ENCODE measurements at regions of chr9 and their contacts with region 1.

Region 1: DNA sequence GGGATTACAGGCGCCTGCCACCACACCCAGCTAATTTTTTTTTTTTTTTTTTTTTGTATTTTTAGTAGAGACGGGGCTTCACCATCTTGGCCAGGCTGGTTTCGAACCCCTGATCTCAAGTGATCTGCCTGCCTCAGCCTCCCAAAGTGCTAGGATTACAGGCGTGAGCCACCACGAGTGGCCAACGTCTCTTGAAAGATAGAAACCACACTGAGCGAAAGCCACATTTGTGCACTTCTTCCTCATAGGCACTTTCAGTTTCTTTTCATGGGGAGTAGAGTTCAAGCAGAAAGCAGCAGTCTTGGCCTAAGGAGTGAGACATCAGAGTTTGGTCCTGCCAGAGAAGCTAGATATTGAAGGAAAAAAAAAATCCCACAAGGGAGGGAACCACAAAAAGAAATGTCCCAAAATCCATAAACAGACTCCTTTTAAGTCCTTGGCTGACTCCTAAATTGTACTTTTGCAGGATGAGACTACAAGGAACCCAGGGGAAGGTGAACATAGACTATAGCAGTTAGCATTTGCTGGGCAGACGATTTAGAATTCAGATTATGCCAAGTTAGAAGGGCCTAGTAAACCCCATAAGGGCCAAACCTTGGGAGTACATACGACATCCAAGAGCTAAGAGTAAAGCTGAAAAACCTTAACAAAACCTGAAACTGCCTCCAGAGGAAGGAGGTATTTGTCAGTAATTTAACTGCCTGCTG is 43.9 kb upstream of the GLIPR2 start:
- DNase-seq: no peak
- ATAC-seq: no peak
- H3K4me3 ChIP-seq: no peak overlapping the region
- H3K27ac ChIP-seq: no peak overlapping the region
- H3K4me1 ChIP-seq: peaks cover 16% of the 10 kb centered on the region
- H3K27me3 ChIP-seq: no peaks in the 10 kb centered on the region
- CTCF ChIP-seq: no peak

Region 2: DNA sequence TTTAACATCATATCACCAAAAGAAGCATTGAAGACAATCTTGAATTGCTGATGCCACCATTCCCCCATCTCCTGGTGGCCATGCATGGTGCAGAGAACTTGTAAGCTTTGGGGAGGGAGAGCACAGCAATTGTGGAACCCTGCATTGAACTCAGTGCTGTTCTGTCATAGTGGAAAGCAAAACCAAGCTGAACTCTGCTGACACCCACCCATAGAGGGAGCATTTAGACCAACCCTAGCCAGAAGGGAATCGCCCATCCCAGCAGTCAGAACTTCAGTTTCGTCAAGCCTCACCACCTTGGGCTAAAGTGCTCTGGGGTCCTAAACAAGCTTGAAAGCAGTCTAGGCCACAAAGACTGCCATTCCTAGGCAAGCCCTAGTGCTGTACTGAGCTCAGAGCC is 640.2 kb before region 1 on chr9:
- CTCF ChIA-PET with region 1: no interaction called
- POLR2A ChIA-PET with region 1: interaction called, 11 read pairs
- intact Hi-C with region 1: no loop called
- DNase-seq: no peak
- ATAC-seq: no peak
- H3K4me3 ChIP-seq: no peak overlapping the region
- H3K27ac ChIP-seq: no peak overlapping the region
- H3K4me1 ChIP-seq: no peaks in the 10 kb centered on the region
- H3K27me3 ChIP-seq: no peaks in the 10 kb centered on the region
- CTCF ChIP-seq: 0 out of 2 replicates have a peak, but pooled peaks have one; percentile 34

Region 3: GRCh38 chr9:36008774-36009300 is 83.8 kb before region 1 on chr9:
- CTCF ChIA-PET with region 1: no interaction called
- POLR2A ChIA-PET with region 1: no interaction called
- intact Hi-C with region 1: no loop called
- DNase-seq: peak; percentile 74
- ATAC-seq: peak; percentile 86
- H3K4me3 ChIP-seq: no peak overlapping the region
- H3K27ac ChIP-seq: no peak overlapping the region
- H3K4me1 ChIP-seq: no peaks in the 10 kb centered on the region
- H3K27me3 ChIP-seq: no peaks in the 10 kb centered on the region
- CTCF ChIP-seq: peak; percentile 98

Region 4: DNA sequence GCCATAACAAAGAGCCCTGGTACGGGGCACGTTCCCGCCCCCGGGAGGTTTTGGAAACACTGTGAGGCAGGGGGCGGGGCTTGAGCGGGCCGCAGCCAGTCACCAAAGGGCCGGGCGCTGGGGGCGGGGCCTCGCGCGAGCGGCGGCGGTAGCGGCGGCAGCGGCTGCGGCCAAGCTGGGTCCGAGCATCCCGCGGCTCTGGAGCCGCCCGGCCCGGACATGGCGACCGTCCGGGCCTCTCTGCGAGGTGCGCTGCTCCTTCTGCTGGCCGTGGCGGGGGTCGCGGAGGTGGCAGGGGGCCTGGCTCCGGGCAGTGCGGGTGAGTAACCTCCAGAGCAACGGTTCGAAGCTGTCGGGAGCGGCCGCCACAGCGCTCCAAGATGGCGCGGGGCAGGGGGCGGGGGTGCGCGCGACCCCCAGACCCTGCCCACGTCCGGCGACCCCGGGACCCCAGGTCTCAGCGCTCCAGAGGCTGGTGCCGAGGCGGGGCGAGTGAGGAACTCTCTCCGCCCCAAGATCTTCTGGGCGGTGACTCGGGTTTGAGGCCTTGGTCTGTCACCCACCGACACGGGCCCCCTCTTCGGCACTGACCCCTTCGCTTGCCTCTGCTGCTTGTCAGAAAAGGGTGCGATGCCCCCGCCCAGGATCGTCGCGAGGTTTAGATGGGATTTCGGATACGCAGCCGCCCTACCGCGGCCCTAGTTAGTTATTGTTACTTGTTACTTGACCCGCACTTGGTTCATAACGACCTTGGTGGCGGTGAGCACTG is 55.7 kb before region 1 on chr9 and contains the start of gene RECK:
- CTCF ChIA-PET with region 1: no interaction called
- POLR2A ChIA-PET with region 1: no interaction called
- intact Hi-C with region 1: loop called (anchors 2 kb)
- DNase-seq: peak; percentile 69
- ATAC-seq: peak; percentile 94
- H3K4me3 ChIP-seq: peak within 1 kb of the TSS; percentile 94
- H3K27ac ChIP-seq: no peak within 1 kb of the TSS
- H3K4me1 ChIP-seq: peaks cover 21% of the 10 kb centered on the region
- H3K27me3 ChIP-seq: no peaks in the 10 kb centered on the region
- CTCF ChIP-seq: no peak
- total RNA-seq, gene RECK: 3.8 and 5.0 TPM in 2 replicates

Region 5: DNA sequence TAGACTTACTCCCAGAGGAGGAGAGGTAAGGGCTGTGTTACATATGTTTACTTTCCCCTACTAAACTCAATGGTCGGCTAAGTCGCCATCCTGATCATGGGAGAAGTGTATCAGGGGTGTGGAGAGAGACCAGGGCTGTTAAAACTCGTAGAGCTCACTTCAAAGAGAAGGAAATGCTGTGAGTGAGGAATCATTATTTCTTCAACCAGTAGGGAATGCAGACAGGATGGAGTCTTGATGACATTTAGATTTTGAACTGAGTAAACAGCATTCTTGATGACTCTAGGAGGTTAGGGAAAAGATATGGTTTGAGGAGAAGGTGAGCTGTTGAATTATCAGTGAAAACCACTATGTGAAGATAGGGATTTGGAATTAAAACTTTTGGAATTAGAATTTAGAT is 38.7 kb before region 1 on chr9:
- CTCF ChIA-PET with region 1: no interaction called
- POLR2A ChIA-PET with region 1: no interaction called
- intact Hi-C with region 1: no loop called
- DNase-seq: no peak
- ATAC-seq: no peak
- H3K4me3 ChIP-seq: no peak overlapping the region
- H3K27ac ChIP-seq: no peak overlapping the region
- H3K4me1 ChIP-seq: no peaks in the 10 kb centered on the region
- H3K27me3 ChIP-seq: no peaks in the 10 kb centered on the region
- CTCF ChIP-seq: no peak

Measured in PC-3 (cell line).